SK-N-SH (cell line): ENCODE measurements at regions of chr6 and their contacts with region 1.

Region 1: GRCh38 chr6:166989427-166990032 is 9.7 kb upstream of the CEP43 start:
- DNase-seq: peak; percentile 34
- H3K4me3 ChIP-seq: no peak overlapping the region; a peak in 1 of 4 replicates
- H3K27ac ChIP-seq: no peak overlapping the region
- H3K4me1 ChIP-seq: peaks cover 0 to 9% of the 10 kb centered on the region in 2 experiments; a peak in 1 of 4 replicates
- H3K27me3 ChIP-seq: no peaks in the 10 kb centered on the region
- CTCF ChIP-seq: peak; percentile 55
- EP300 ChIP-seq: no peak
- RAD21 ChIP-seq: peak; percentile 70

Region 2: GRCh38 chr6:166786704-166787293 is 202.7 kb before region 1 on chr6:
- CTCF ChIA-PET with region 1: interaction called, 16 read pairs
- POLR2A ChIA-PET with region 1: no interaction called
- DNase-seq: peak; percentile 78
- H3K4me3 ChIP-seq: peak overlapping the region in 1 of 2 experiments; percentile 24; a peak in 1 of 4 replicates
- H3K27ac ChIP-seq: no peak overlapping the region
- H3K4me1 ChIP-seq: no peaks in the 10 kb centered on the region
- H3K27me3 ChIP-seq: no peaks in the 10 kb centered on the region
- CTCF ChIP-seq: peak; percentile 82
- EP300 ChIP-seq: no peak
- RAD21 ChIP-seq: peak; percentile 89

Region 3: DNA sequence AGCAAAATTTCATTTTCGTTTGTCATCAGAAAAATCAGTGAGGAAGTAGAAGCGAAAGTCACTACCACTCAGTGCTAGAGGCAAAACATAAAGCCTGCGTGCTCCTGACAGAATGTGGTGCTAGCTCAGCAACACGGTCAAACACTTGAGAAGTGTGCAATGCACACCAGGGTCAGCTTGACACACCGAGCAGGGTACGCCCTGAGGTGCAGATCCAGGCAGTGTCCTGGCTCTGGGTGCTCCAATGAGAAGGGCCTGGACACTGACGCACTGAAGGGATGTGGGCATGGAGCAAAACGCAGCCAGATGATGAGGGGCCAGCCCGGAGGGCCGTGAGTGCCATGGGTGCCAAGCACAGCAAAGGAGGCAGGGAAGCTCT is 39.1 kb before region 1 on chr6:
- CTCF ChIA-PET with region 1: interaction called, 13 read pairs
- POLR2A ChIA-PET with region 1: no interaction called
- DNase-seq: no peak
- H3K4me3 ChIP-seq: no peak overlapping the region
- H3K27ac ChIP-seq: no peak overlapping the region
- H3K4me1 ChIP-seq: peaks cover 0 to 4% of the 10 kb centered on the region in 2 experiments; a peak in 1 of 4 replicates
- H3K27me3 ChIP-seq: no peaks in the 10 kb centered on the region
- CTCF ChIP-seq: no peak
- EP300 ChIP-seq: no peak
- RAD21 ChIP-seq: no peak

Region 4: GRCh38 chr6:166956444-166957086 is 33.0 kb before region 1 on chr6 and contains the start of gene RNASET2:
- CTCF ChIA-PET with region 1: interaction called, 13 read pairs
- POLR2A ChIA-PET with region 1: no interaction called
- DNase-seq: peak; percentile 98
- H3K4me3 ChIP-seq: peak within 1 kb of the TSS; percentile 82 to 89
- H3K27ac ChIP-seq: peak within 1 kb of the TSS; percentile 47 to 60; a peak in 3 of 4 replicates
- H3K4me1 ChIP-seq: peaks cover 0 to 14% of the 10 kb centered on the region in 2 experiments; a peak in 1 of 4 replicates
- H3K27me3 ChIP-seq: no peaks in the 10 kb centered on the region
- CTCF ChIP-seq: no peak
- EP300 ChIP-seq: no peak
- RAD21 ChIP-seq: no peak
- polyA plus RNA-seq, gene RNASET2: 58.4 and 59.2 TPM in 2 replicates